CD4-positive, alpha-beta T cell (primary cell): ENCODE measurements at regions of chr14 and their contacts with region 1.

Region 1: DNA sequence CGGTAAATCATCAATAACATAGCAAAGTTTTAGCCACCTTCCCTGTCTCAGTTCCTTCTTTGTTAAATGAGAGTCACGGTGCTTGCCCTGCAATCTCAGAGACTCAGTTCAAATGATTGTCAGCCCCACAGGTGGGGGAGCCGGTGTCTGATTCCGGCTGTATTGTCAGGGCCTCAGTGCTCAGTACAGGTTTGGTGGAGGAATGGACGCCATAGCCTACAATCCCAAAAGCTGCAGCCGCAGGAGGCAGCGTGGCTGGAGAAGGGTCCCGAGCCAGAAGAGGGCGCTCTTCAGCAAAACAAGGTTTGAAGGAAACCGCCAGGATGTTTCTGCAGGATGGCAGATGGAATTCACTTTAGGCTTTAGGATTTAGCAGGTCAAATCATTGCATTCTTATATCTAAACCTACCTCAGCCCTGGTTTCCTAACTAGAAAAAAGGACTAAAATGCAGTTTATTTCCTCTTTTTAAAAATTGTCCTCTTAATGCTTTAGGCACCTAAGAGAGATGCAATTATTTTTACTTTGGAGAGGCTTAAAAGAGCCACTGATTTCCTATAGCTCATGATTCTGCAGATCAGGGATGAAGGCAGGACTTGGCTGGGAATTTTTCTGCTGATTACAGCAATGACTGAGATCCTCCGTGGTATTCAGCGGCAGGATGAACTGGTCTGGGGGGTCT is 29.2 kb downstream of the FOS start:
- DNase-seq: peak; percentile 56 to 87 (median 65)
- ATAC-seq: peak; percentile 64
- H3K4me3 ChIP-seq: no peak overlapping the region
- H3K4me3 Mint-ChIP-seq: no peak overlapping the region
- H3K27ac ChIP-seq: no peak overlapping the region
- H3K27ac Mint-ChIP-seq: no peak overlapping the region
- H3K4me1 ChIP-seq: peaks cover 13% of the 10 kb centered on the region
- H3K4me1 Mint-ChIP-seq: peaks cover 10% of the 10 kb centered on the region
- H3K27me3 ChIP-seq: no peaks in the 10 kb centered on the region
- H3K27me3 Mint-ChIP-seq: no peaks in the 10 kb centered on the region
- CTCF ChIP-seq: peak; percentile 95

Region 2: DNA sequence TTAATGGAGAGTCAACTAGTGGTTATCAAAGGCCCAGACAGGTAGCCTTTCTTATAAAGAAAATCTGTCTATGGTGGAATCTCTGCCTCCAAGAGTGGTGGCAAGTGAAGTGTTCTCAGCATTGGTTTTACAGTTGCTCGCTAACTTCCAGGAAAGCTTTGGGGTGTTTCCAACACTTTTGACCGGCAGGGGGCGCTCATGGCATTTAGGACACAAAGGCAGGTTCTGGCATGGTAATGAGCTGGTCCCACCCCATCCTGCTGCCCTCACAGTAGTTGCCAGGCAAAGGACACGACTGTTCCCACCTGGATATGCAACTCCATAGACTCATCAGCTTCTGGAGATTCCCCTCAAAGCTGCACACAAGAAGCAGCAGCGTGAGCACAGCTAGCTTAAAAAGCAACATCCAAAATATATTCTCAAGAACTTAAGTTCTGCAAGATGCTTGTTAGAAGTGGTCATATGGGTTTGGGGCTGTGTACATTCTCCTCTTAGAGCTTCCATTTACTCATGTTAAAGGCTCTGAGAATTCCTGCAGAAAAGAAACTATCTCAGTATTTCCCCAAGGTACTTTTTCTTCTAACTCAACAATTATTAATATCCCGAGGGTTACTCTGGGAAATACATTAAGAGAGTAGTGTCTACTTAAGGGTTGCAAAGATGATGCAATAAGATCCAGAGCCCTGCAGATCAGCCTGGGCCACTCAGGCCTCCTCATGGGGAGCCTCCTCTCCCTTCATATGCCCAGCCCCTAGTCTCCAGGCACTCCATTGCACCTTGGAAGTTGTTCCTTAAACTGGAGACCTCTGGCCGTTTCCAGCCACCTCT is 446.7 kb before region 1 on chr14:
- CTCF ChIA-PET with region 1: no interaction called
- POLR2A ChIA-PET with region 1: no interaction called
- intact Hi-C with region 1: loop called in 1 of 2 experiments (anchors 5 kb)
- DNase-seq: peak; percentile 83 to 98 (median 92)
- ATAC-seq: peak; percentile 88
- H3K4me3 ChIP-seq: no peak overlapping the region
- H3K4me3 Mint-ChIP-seq: no peak overlapping the region
- H3K27ac ChIP-seq: no peak overlapping the region
- H3K27ac Mint-ChIP-seq: no peak overlapping the region
- H3K4me1 ChIP-seq: peaks cover 8% of the 10 kb centered on the region
- H3K4me1 Mint-ChIP-seq: peaks cover 7% of the 10 kb centered on the region
- H3K27me3 ChIP-seq: no peaks in the 10 kb centered on the region
- H3K27me3 Mint-ChIP-seq: no peaks in the 10 kb centered on the region
- CTCF ChIP-seq: peak; percentile 88

Region 3: GRCh38 chr14:75132382-75133086 is 175.3 kb before region 1 on chr14:
- CTCF ChIA-PET with region 1: interaction called, 17 read pairs
- POLR2A ChIA-PET with region 1: no interaction called
- intact Hi-C with region 1: loop called (anchors 1 kb)
- DNase-seq: peak in 9 of 14 experiments; percentile 6 to 87 (median 46)
- ATAC-seq: peak; percentile 95
- H3K4me3 ChIP-seq: no peak overlapping the region
- H3K4me3 Mint-ChIP-seq: no peak overlapping the region
- H3K27ac ChIP-seq: no peak overlapping the region
- H3K27ac Mint-ChIP-seq: peak overlapping the region; percentile 2
- H3K4me1 ChIP-seq: peaks cover 10% of the 10 kb centered on the region
- H3K4me1 Mint-ChIP-seq: peaks cover 15% of the 10 kb centered on the region
- H3K27me3 ChIP-seq: no peaks in the 10 kb centered on the region
- H3K27me3 Mint-ChIP-seq: no peaks in the 10 kb centered on the region
- CTCF ChIP-seq: peak; percentile 73

Region 4: GRCh38 chr14:75230140-75231045 is 77.4 kb before region 1 on chr14:
- CTCF ChIA-PET with region 1: interaction called, 18 read pairs
- POLR2A ChIA-PET with region 1: no interaction called
- intact Hi-C with region 1: no loop called
- DNase-seq: peak; percentile 19 to 89 (median 38)
- ATAC-seq: peak; percentile 62
- H3K4me3 ChIP-seq: no peak overlapping the region
- H3K4me3 Mint-ChIP-seq: peak overlapping the region; percentile 46
- H3K27ac ChIP-seq: peak overlapping the region in 1 of 2 donors; percentile 55
- H3K27ac Mint-ChIP-seq: peak overlapping the region; percentile 75
- H3K4me1 ChIP-seq: peaks cover 58% of the 10 kb centered on the region
- H3K4me1 Mint-ChIP-seq: peaks cover 71% of the 10 kb centered on the region
- H3K27me3 ChIP-seq: no peaks in the 10 kb centered on the region
- H3K27me3 Mint-ChIP-seq: no peaks in the 10 kb centered on the region
- CTCF ChIP-seq: peak; percentile 20

Region 5: DNA sequence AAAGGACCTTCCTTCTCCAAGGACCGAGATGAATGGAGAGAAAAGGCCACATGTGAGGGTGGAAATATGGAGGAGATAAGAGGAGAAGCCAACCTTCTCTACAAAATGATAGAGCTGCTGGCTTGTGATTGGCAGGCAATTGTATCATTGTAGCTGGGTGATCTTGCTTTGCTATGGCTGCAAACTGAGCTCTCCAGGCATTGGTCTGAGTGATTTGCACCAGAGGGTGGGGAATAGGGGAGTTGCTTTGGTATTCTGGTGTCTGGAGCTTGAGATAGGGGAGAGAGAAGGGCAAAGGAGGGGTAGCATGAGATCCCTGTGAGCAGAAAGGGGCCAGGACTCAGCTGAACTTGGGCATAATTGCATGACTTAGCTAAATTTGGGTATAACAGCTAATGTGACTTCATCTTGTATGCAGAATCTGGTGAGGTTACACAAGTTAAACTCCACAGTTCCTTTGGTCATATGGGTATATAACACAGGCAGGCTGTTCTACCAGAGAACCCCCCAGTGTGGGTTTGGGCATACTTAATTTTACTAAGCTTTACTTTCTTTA is 42.7 kb after region 1 on chr14:
- CTCF ChIA-PET with region 1: no interaction called
- POLR2A ChIA-PET with region 1: no interaction called
- intact Hi-C with region 1: no loop called
- DNase-seq: no peak
- ATAC-seq: no peak
- H3K4me3 ChIP-seq: no peak overlapping the region
- H3K4me3 Mint-ChIP-seq: no peak overlapping the region
- H3K27ac ChIP-seq: no peak overlapping the region
- H3K27ac Mint-ChIP-seq: no peak overlapping the region
- H3K4me1 ChIP-seq: no peaks in the 10 kb centered on the region
- H3K4me1 Mint-ChIP-seq: no peaks in the 10 kb centered on the region
- H3K27me3 ChIP-seq: no peaks in the 10 kb centered on the region
- H3K27me3 Mint-ChIP-seq: no peaks in the 10 kb centered on the region
- CTCF ChIP-seq: no peak

Region 6: DNA sequence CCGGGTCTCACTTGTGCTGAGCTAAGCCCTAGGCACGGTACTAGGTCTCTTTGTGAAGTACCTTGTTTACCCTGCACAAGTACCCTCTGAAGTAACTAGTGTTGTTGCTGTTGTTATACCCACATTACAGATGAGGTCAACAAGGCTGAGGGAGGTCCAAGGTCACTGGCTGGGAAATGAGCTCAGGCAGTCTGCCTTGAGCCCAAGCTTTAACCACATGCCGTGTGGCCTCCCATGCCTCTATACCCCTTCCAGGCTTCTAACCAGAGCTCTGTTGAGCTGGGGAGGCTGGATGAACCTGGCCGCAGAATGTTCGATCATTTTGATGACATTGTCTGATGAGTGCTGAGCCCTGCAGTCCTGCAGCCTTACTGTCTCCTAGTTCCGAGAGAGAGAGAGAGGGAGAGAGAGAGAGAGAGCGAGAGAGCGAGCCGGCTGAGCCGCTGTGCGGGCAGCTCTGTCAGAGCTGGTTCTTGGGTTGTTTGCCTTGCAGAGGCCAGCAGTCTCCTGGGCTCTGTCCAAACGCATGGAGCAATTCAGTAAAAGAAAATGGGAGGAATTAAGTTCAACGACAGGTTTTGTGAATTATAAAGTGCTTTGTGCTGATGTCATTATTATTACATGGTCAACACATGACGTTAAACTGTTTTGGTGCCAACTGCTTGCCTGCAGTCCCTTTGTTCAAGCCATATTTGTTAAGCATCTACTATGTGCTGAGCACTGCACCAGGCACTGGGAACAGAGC is 133.1 kb after region 1 on chr14:
- CTCF ChIA-PET with region 1: no interaction called
- POLR2A ChIA-PET with region 1: no interaction called
- intact Hi-C with region 1: no loop called
- DNase-seq: no peak
- ATAC-seq: no peak
- H3K4me3 ChIP-seq: no peak overlapping the region
- H3K4me3 Mint-ChIP-seq: no peak overlapping the region
- H3K27ac ChIP-seq: no peak overlapping the region
- H3K27ac Mint-ChIP-seq: no peak overlapping the region
- H3K4me1 ChIP-seq: no peaks in the 10 kb centered on the region
- H3K4me1 Mint-ChIP-seq: peaks cover 5% of the 10 kb centered on the region
- H3K27me3 ChIP-seq: no peaks in the 10 kb centered on the region
- H3K27me3 Mint-ChIP-seq: no peaks in the 10 kb centered on the region
- CTCF ChIP-seq: no peak

Region 7: GRCh38 chr14:75454963-75455945 is 147.4 kb after region 1 on chr14:
- CTCF ChIA-PET with region 1: no interaction called
- POLR2A ChIA-PET with region 1: no interaction called
- intact Hi-C with region 1: loop called in 1 of 2 experiments (anchors 2 kb)
- DNase-seq: no peak
- ATAC-seq: no peak
- H3K4me3 ChIP-seq: no peak overlapping the region
- H3K4me3 Mint-ChIP-seq: no peak overlapping the region
- H3K27ac ChIP-seq: no peak overlapping the region
- H3K27ac Mint-ChIP-seq: no peak overlapping the region
- H3K4me1 ChIP-seq: peaks cover 7% of the 10 kb centered on the region
- H3K4me1 Mint-ChIP-seq: no peaks in the 10 kb centered on the region
- H3K27me3 ChIP-seq: no peaks in the 10 kb centered on the region
- H3K27me3 Mint-ChIP-seq: no peaks in the 10 kb centered on the region
- CTCF ChIP-seq: no peak

Region 8: GRCh38 chr14:75560962-75561432 is 253.2 kb after region 1 on chr14:
- CTCF ChIA-PET with region 1: no interaction called
- POLR2A ChIA-PET with region 1: no interaction called
- intact Hi-C with region 1: loop called (anchors 1 to 2 kb)
- DNase-seq: peak in 11 of 14 experiments; percentile 19 to 76 (median 38)
- ATAC-seq: peak; percentile 56
- H3K4me3 ChIP-seq: no peak overlapping the region
- H3K4me3 Mint-ChIP-seq: no peak overlapping the region
- H3K27ac ChIP-seq: no peak overlapping the region
- H3K27ac Mint-ChIP-seq: peak overlapping the region; percentile 28
- H3K4me1 ChIP-seq: peaks cover 26% of the 10 kb centered on the region
- H3K4me1 Mint-ChIP-seq: peaks cover 39% of the 10 kb centered on the region
- H3K27me3 ChIP-seq: no peaks in the 10 kb centered on the region
- H3K27me3 Mint-ChIP-seq: no peaks in the 10 kb centered on the region
- CTCF ChIP-seq: peak; percentile 96

Region 9: DNA sequence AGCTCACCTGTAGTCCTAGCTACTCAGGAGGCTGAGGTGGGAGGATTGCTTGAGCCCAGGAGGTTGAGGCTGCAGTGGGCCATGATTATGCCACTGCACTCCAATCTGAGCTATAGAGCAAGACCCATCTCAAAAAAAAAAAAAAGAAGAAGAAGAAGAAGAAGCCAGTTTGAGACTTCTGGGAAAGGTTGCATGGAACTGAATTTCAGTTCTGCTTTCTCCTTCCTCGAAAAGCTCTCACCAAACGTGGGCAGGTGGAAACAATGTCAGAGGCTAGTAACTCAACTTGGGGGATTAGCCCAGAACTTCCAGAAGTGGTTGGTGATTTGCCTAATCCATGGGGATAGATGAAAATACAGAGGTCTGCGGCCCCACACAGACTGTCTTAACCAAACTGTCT is 289.3 kb after region 1 on chr14:
- CTCF ChIA-PET with region 1: no interaction called
- POLR2A ChIA-PET with region 1: no interaction called
- intact Hi-C with region 1: no loop called
- DNase-seq: peak in 1 of 14 experiments; percentile 6
- ATAC-seq: no peak
- H3K4me3 ChIP-seq: no peak overlapping the region
- H3K4me3 Mint-ChIP-seq: no peak overlapping the region
- H3K27ac ChIP-seq: no peak overlapping the region
- H3K27ac Mint-ChIP-seq: no peak overlapping the region
- H3K4me1 ChIP-seq: no peaks in the 10 kb centered on the region
- H3K4me1 Mint-ChIP-seq: no peaks in the 10 kb centered on the region
- H3K27me3 ChIP-seq: no peaks in the 10 kb centered on the region
- H3K27me3 Mint-ChIP-seq: no peaks in the 10 kb centered on the region
- CTCF ChIP-seq: no peak

Region 10: GRCh38 chr14:75654127-75654732 is 346.4 kb after region 1 on chr14:
- CTCF ChIA-PET with region 1: no interaction called
- POLR2A ChIA-PET with region 1: no interaction called
- intact Hi-C with region 1: loop called (anchors 1 to 2 kb)
- DNase-seq: peak; percentile 64 to 91 (median 78)
- ATAC-seq: peak; percentile 98
- H3K4me3 ChIP-seq: no peak overlapping the region
- H3K4me3 Mint-ChIP-seq: no peak overlapping the region
- H3K27ac ChIP-seq: no peak overlapping the region
- H3K27ac Mint-ChIP-seq: no peak overlapping the region
- H3K4me1 ChIP-seq: peaks cover 2% of the 10 kb centered on the region
- H3K4me1 Mint-ChIP-seq: peaks cover 18% of the 10 kb centered on the region
- H3K27me3 ChIP-seq: no peaks in the 10 kb centered on the region
- H3K27me3 Mint-ChIP-seq: no peaks in the 10 kb centered on the region
- CTCF ChIP-seq: peak; percentile 94